BJ (cell line): ENCODE measurements at regions of chr13 and their contacts with region 1.

Region 1: DNA sequence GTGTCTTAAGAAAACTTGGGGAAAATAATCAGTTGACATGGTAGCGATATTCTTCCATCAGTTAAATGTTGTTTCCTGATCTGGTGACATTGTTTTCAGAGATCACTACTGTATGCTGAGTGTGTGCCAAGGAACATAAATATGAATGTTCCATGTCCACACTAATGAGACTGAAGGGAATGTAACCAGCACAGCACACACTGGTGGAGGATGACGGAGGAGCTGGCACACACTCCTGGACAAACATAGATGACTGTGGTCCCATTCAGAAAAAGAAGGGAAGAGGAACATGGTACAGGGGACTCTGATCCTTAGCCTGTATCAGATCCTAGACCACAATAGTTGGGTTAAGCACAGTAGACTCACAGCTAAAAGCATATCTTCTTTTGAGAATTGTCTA is 574.8 kb downstream of the MYO16 start:
- DNase-seq: no peak
- H3K4me3 ChIP-seq: no peak overlapping the region
- H3K27me3 ChIP-seq: no peaks in the 10 kb centered on the region
- CTCF ChIP-seq: no peak

Region 2: GRCh38 chr13:109156181-109156935 is 47.9 kb before region 1 on chr13:
- CTCF ChIA-PET with region 1: no interaction called
- POLR2A ChIA-PET with region 1: interaction called, 12 read pairs
- DNase-seq: peak; percentile 51
- H3K4me3 ChIP-seq: no peak overlapping the region
- H3K27me3 ChIP-seq: no peaks in the 10 kb centered on the region
- CTCF ChIP-seq: no peak

Region 3: GRCh38 chr13:109273326-109273751 is 69.1 kb after region 1 on chr13:
- CTCF ChIA-PET with region 1: no interaction called
- POLR2A ChIA-PET with region 1: interaction called, 15 read pairs
- DNase-seq: no peak
- H3K4me3 ChIP-seq: no peak overlapping the region
- H3K27me3 ChIP-seq: no peaks in the 10 kb centered on the region
- CTCF ChIP-seq: no peak

Region 4: GRCh38 chr13:109756778-109757177 is 552.5 kb after region 1 on chr13:
- CTCF ChIA-PET with region 1: no interaction called
- POLR2A ChIA-PET with region 1: no interaction called
- DNase-seq: no peak
- H3K4me3 ChIP-seq: no peak overlapping the region
- H3K27me3 ChIP-seq: no peaks in the 10 kb centered on the region
- CTCF ChIP-seq: no peak